CD8-positive, alpha-beta T cell (primary cell): ENCODE measurements at regions of chr22 and their contacts with region 1.

Region 1: DNA sequence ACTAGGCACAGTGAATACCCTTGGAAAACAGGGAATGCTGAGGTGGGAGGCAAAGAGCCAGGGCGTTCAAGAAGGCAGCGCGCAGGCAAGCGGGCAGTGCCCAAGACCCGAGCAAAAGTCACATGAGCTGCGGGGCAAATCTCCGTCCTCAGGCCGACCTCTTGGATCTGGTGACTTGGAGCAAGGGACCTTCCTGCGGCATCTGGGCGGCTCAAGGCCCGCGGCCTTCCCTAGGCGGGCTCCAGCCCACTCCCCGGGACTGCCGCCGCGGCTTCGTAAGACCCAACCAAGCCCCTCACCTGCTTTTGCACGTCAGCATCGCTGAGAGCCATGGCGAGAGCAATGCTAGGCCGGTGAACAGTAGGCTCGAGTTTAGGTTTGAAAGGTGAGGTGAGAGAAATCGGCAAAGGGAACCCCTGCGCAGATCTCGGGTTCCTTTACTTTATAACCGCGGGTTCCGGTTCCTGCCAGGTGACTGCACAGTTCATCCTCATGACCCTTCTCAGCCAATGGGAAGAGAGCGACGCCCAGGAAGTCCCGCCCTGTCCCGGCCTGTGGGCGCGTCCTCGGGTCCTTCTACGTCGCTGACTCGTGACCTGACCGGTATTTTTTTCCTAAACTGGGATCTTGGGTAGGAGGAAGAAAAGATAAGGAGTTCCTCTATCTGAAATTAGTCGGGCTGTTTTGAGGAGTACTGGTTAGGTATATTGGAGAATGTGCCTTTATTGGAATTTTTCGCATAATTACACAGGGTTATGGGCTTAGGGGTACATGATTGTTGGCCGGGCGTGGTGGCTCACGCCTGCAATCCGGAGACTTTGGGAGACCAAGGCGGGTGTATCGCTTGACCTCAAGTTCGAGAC is at the start of gene ATP6V1E1:
- DNase-seq: peak; percentile 90 to 97 (median 94)
- ATAC-seq: peak; percentile 100
- H3K4me3 ChIP-seq: peak within 1 kb of the TSS; percentile 84 to 100
- H3K4me3 Mint-ChIP-seq: peak within 1 kb of the TSS; percentile 97
- H3K27ac ChIP-seq: peak within 1 kb of the TSS; percentile 93 to 94
- H3K27ac Mint-ChIP-seq: peak within 1 kb of the TSS; percentile 99
- H3K4me1 ChIP-seq: peaks cover 23% of the 10 kb centered on the region
- H3K4me1 Mint-ChIP-seq: peaks cover 33% of the 10 kb centered on the region
- H3K27me3 ChIP-seq: no peaks in the 10 kb centered on the region
- H3K27me3 Mint-ChIP-seq: no peaks in the 10 kb centered on the region
- CTCF ChIP-seq: no peak
- total RNA-seq, gene ATP6V1E1: 49.8 to 53.0 TPM

Region 2: GRCh38 chr22:17638432-17639246 is 10.1 kb after region 1 on chr22 and contains the start of gene BCL2L13:
- CTCF ChIA-PET with region 1: no interaction called
- POLR2A ChIA-PET with region 1: interaction called, 9 read pairs
- intact Hi-C with region 1: loop called (anchors 1 kb)
- DNase-seq: peak; percentile 73 to 93 (median 89)
- ATAC-seq: peak; percentile 92
- H3K4me3 ChIP-seq: peak within 1 kb of the TSS; percentile 67 to 90
- H3K4me3 Mint-ChIP-seq: peak within 1 kb of the TSS; percentile 92
- H3K27ac ChIP-seq: peak within 1 kb of the TSS; percentile 98 to 99
- H3K27ac Mint-ChIP-seq: peak within 1 kb of the TSS; percentile 98
- H3K4me1 ChIP-seq: peaks cover 21% of the 10 kb centered on the region
- H3K4me1 Mint-ChIP-seq: peaks cover 29% of the 10 kb centered on the region
- H3K27me3 ChIP-seq: no peaks in the 10 kb centered on the region
- H3K27me3 Mint-ChIP-seq: no peaks in the 10 kb centered on the region
- CTCF ChIP-seq: no peak
- total RNA-seq, gene BCL2L13: 7.8 to 9.5 TPM

Region 3: GRCh38 chr22:17726464-17727246 is 98.1 kb after region 1 on chr22:
- CTCF ChIA-PET with region 1: no interaction called
- POLR2A ChIA-PET with region 1: no interaction called
- intact Hi-C with region 1: no loop called
- DNase-seq: no peak
- ATAC-seq: no peak
- H3K4me3 ChIP-seq: no peak overlapping the region
- H3K4me3 Mint-ChIP-seq: no peak overlapping the region
- H3K27ac ChIP-seq: peak overlapping the region in 1 of 2 experiments; percentile 44
- H3K27ac Mint-ChIP-seq: peak overlapping the region; percentile 85
- H3K4me1 ChIP-seq: peaks cover 10% of the 10 kb centered on the region
- H3K4me1 Mint-ChIP-seq: peaks cover 10% of the 10 kb centered on the region
- H3K27me3 ChIP-seq: no peaks in the 10 kb centered on the region
- H3K27me3 Mint-ChIP-seq: no peaks in the 10 kb centered on the region
- CTCF ChIP-seq: no peak